Breast epithelium (tissue), 4 donors: ENCODE measurements at regions of chr6 and their contacts with region 1.

Region 1: DNA sequence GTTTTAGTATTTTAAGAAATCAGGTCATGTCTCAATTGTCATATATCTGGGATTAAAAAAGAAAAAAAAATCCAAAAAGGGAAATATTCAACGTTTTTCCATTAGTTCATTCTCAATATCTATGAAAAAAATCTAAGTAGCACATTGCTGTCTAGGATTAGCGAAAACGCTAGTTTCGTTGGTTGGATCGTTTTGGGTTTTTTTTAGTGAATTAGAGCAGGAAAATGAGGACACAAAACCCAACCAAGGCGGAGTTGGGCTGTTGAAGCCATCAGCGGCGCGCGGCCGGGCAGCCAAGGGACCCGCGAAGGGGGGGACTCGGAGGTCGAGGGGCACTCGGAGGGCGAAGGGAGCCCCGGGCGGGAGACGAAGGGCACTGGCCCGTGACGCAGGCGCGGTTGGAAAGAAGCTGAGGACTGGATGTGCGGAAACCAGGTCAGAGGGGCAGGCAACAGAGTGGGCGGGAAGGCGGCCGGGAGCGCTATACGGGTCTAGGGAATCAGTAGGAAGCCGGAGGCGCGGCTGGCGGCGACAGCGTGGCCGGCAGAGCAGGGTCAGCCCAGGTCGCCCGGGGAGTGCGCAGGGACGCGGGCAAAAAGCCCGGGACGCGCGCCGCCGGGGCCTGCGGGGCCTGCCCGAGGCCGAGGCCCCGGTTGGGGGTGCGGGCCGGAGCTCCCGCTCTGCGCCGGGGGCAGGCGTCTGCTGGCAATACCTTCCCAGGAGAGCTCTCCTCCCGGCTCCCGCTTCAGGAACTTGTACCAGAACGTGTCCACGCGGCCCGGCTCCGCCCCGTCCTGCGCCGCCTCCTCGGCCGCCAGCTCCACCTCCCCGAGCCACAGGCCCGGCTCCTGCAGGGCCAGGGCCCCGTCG is 599 bp downstream of the EPM2A start:
- DNase-seq: peak; percentile 75 to 84
- H3K4me3 ChIP-seq: peak overlapping the region; percentile 63 to 94 (median 80)
- H3K27ac ChIP-seq: peak overlapping the region; percentile 95 to 98
- H3K4me1 ChIP-seq: no peaks in the 10 kb centered on the region
- H3K27me3 ChIP-seq: no peaks in the 10 kb centered on the region
- CTCF ChIP-seq: no peak
- POLR2A ChIP-seq: no peak

Region 2: GRCh38 chr6:145814501-145815308 is 80.0 kb after region 1 on chr6 and contains the start of gene FBXO30:
- intact Hi-C with region 1: loop called (anchors 5 kb)
- DNase-seq: peak; percentile 81
- H3K4me3 ChIP-seq: peak within 1 kb of the TSS; percentile 66 to 81 (median 80)
- H3K27ac ChIP-seq: peak within 1 kb of the TSS; percentile 92 to 94
- H3K4me1 ChIP-seq: peaks cover 0 to 5% of the 10 kb centered on the region in 2 donors
- H3K27me3 ChIP-seq: no peaks in the 10 kb centered on the region
- CTCF ChIP-seq: peak in 2 of 3 donors; percentile 40 to 49
- POLR2A ChIP-seq: no peak
- total RNA-seq, gene FBXO30: 8.0 to 11.7 (median 8.2) TPM

Region 3: DNA sequence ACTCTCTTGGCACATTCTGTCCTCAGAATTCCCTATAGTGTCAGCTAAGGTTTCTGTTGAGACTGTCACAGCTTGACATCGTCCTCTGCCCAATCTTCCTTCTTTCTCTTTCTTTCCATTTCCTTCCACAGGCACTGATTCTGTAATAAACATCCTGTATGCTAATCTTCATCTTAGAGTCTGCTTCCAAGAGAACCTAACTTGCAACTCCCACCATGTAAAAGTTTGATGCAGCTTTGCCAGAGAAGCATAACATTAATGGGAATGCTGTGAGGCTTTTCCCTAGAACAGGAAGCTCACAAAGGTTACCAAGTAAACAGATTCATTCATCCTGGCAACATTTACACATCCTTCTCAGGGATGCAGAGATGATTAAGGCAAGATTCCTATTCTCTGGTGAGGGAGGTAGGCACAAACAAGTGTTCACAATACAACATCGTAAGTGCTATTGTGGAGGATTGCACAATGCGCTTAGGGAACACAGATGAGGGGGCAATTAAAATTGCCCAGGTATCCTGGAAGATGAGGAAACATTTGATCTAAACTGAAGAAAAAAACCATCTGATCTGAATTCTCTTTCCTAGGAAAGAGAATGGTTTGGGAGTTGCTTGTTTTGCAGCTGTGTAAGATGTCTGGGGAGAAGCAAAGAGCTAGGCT is 368.8 kb after region 1 on chr6:
- intact Hi-C with region 1: loop called (anchors 5 kb)
- DNase-seq: no peak
- H3K4me3 ChIP-seq: no peak overlapping the region
- H3K27ac ChIP-seq: no peak overlapping the region
- H3K4me1 ChIP-seq: no peaks in the 10 kb centered on the region
- H3K27me3 ChIP-seq: no peaks in the 10 kb centered on the region
- CTCF ChIP-seq: no peak
- POLR2A ChIP-seq: no peak